ENCODE measurements at regions of chr5 and their contacts with region 1.

Region 1: GRCh38 chr5:158658446-158659230 is 441.1 kb downstream of the EBF1 start:
- DNase-seq: no peak
- H3K4me3 ChIP-seq: no peak overlapping the region
- H3K27me3 ChIP-seq: no peaks in the 10 kb centered on the region
- CTCF ChIP-seq: no peak

Region 2: GRCh38 chr5:158234323-158235158 is 424.1 kb before region 1 on chr5:
- CTCF ChIA-PET with region 1: no interaction called
- POLR2A ChIA-PET with region 1: interaction called, 12 read pairs
- DNase-seq: no peak
- H3K4me3 ChIP-seq: no peak overlapping the region
- H3K27me3 ChIP-seq: no peaks in the 10 kb centered on the region
- CTCF ChIP-seq: no peak

Region 3: DNA sequence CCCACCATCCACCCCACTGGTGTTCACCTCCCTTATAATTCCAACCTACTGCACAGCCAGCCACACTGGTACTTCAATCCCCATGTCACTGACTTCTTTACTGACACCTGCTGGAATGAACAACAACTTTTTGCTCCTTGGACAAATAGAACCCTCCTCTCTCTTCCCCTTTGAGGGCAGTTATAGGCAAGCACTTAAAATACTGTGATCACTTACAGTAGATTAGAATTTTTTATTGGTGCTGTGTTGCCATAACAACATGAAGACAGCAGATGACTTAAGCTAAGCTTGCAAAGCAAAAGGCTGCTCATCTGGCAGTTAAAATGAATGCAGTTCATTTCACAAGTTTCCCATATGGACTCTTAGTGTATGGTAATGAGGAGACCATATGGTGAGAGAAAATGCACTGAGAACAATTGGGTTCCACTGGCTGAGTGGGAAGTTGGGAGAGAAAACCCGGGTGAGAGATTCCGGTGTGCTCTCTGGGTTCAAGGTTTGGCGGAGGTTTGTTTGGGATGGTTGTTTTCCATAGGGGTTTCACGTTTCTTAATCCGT is 66.7 kb after region 1 on chr5:
- CTCF ChIA-PET with region 1: no interaction called
- POLR2A ChIA-PET with region 1: no interaction called
- DNase-seq: no peak
- H3K4me3 ChIP-seq: no peak overlapping the region
- H3K27me3 ChIP-seq: no peaks in the 10 kb centered on the region
- CTCF ChIP-seq: no peak

Region 4: GRCh38 chr5:158819840-158820620 is 161.4 kb after region 1 on chr5:
- CTCF ChIA-PET with region 1: no interaction called
- POLR2A ChIA-PET with region 1: no interaction called
- DNase-seq: no peak
- H3K4me3 ChIP-seq: no peak overlapping the region
- H3K27me3 ChIP-seq: no peaks in the 10 kb centered on the region
- CTCF ChIP-seq: no peak